ENCODE measurements at regions of chr6 and their contacts with region 1.

Region 1: DNA sequence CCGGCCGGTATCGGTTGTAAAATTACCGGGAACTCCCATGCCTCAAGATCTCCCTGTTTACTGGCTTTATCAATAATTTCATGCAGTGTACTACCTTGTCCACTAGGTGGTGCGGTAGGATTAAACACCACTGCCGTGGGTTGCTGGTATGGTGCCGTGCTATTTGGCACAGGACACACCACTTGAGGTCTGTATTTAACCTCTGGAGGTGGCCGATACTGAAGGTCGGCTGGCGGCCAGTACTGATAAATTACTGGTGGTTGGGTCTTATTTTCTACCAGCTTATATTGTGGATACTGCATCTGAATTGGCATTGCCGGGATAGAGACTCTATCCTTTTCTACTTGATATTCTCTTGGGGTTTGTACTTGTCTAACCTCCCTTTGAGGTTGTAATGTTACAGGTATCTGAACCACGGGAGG is 14.3 kb upstream of the PTCRA start:
- DNase-seq: peak; percentile 25 to 89 (median 56)
- ATAC-seq: peak; percentile 90 to 97 (median 94)
- H3K4me3 ChIP-seq: no peak overlapping the region
- H3K4me3 Mint-ChIP-seq: no peak overlapping the region
- H3K27ac ChIP-seq: no peak overlapping the region
- H3K27ac Mint-ChIP-seq: no peak overlapping the region
- H3K4me1 ChIP-seq: peaks cover 0 to 4% of the 10 kb centered on the region in 2 experiments
- H3K4me1 Mint-ChIP-seq: peaks cover 7 to 13% (median 11%) of the 10 kb centered on the region in 3 donors
- H3K27me3 ChIP-seq: no peaks in the 10 kb centered on the region
- H3K27me3 Mint-ChIP-seq: no peaks in the 10 kb centered on the region

Region 2: GRCh38 chr6:42661540-42662153 is 239.9 kb before region 1 on chr6:
- CTCF ChIA-PET with region 1: interaction called in 1 of 2 experiments, 10 read pairs
- POLR2A ChIA-PET with region 1: no interaction called
- DNase-seq: peak; percentile 66 to 89 (median 83)
- ATAC-seq: peak; percentile 87 to 96 (median 91)
- H3K4me3 ChIP-seq: no peak overlapping the region
- H3K4me3 Mint-ChIP-seq: no peak overlapping the region
- H3K27ac ChIP-seq: no peak overlapping the region
- H3K27ac Mint-ChIP-seq: peak overlapping the region; percentile 5 to 12
- H3K4me1 ChIP-seq: peaks cover 0 to 2% of the 10 kb centered on the region in 2 experiments
- H3K4me1 Mint-ChIP-seq: peaks cover 0 to 3% (median 0%) of the 10 kb centered on the region in 3 donors
- H3K27me3 ChIP-seq: no peaks in the 10 kb centered on the region
- H3K27me3 Mint-ChIP-seq: no peaks in the 10 kb centered on the region

Region 3: GRCh38 chr6:42890311-42891198 is 11.0 kb before region 1 on chr6:
- CTCF ChIA-PET with region 1: no interaction called
- POLR2A ChIA-PET with region 1: no interaction called
- DNase-seq: peak; percentile 73 to 90 (median 84)
- ATAC-seq: peak; percentile 93 to 97 (median 96)
- H3K4me3 ChIP-seq: peak overlapping the region; percentile 84 to 91
- H3K4me3 Mint-ChIP-seq: peak overlapping the region; percentile 88 to 96 (median 92)
- H3K27ac ChIP-seq: peak overlapping the region; percentile 76
- H3K27ac Mint-ChIP-seq: peak overlapping the region; percentile 96 to 99
- H3K4me1 ChIP-seq: peaks cover 9 to 13% of the 10 kb centered on the region in 2 experiments
- H3K4me1 Mint-ChIP-seq: peaks cover 5 to 20% (median 18%) of the 10 kb centered on the region in 3 donors
- H3K27me3 ChIP-seq: no peaks in the 10 kb centered on the region
- H3K27me3 Mint-ChIP-seq: no peaks in the 10 kb centered on the region

Region 4: DNA sequence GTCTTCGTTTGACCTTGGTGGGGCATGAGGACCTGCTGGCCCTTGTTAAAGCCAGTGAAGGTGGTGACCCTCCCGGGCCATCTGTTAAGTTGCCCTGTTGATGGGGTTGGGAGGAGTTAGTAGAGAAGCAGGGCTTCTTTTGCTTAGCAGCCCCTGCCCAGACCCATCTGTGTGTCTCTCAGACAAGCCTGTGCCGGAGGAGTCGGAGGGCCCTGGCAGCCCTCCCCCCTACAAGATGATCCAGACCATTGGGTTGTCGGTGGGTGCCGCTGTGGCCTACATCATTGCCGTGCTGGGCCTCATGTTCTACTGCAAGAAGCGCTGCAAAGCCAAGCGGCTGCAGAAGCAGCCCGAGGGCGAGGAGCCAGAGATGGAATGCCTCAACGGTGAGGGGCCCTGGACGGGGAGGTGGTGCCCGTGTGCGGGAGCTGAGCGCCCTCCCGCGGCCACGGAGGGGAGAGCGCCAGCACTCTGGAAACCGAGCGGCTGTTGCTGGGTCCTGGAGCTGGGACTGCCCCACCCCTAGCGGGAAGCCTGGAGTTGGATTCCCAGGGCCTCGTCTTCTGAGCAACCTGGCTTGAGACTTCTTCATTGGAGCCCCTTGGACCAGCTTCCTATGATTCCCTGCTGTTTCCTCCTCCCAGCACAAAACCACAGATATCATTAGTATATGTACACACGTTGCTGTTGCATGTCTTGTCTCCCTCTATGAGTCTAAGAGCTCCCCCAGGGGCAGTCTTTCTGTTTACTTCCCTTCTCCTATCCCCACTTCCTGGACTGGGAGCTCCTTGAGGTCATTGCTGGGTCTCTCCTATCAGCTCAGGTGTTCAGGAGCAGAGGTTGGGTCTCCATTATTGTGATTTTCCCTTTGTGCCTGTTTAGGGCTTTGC is 241.9 kb after region 1 on chr6:
- CTCF ChIA-PET with region 1: interaction called, 10 to 14 read pairs
- POLR2A ChIA-PET with region 1: no interaction called
- DNase-seq: peak; percentile 49 to 88 (median 70)
- ATAC-seq: peak; percentile 78 to 97 (median 80)
- H3K4me3 ChIP-seq: peak overlapping the region; percentile 1 to 50
- H3K4me3 Mint-ChIP-seq: peak overlapping the region in 1 of 3 donors; percentile 70
- H3K27ac ChIP-seq: peak overlapping the region; percentile 3
- H3K27ac Mint-ChIP-seq: no peak overlapping the region
- H3K4me1 ChIP-seq: peaks cover 13 to 29% of the 10 kb centered on the region in 2 experiments
- H3K4me1 Mint-ChIP-seq: peaks cover 13 to 28% (median 15%) of the 10 kb centered on the region in 3 donors
- H3K27me3 ChIP-seq: peaks cover 0 to 2% of the 10 kb centered on the region in 2 experiments
- H3K27me3 Mint-ChIP-seq: peaks cover 0 to 3% of the 10 kb centered on the region in 2 donors